Activated CD4-positive, alpha-beta T cell treated with anti-CD3 and anti-CD28 coated beads for 36 hours (primary cell): ENCODE measurements at regions of chr6 and their contacts with region 1.

Region 1: DNA sequence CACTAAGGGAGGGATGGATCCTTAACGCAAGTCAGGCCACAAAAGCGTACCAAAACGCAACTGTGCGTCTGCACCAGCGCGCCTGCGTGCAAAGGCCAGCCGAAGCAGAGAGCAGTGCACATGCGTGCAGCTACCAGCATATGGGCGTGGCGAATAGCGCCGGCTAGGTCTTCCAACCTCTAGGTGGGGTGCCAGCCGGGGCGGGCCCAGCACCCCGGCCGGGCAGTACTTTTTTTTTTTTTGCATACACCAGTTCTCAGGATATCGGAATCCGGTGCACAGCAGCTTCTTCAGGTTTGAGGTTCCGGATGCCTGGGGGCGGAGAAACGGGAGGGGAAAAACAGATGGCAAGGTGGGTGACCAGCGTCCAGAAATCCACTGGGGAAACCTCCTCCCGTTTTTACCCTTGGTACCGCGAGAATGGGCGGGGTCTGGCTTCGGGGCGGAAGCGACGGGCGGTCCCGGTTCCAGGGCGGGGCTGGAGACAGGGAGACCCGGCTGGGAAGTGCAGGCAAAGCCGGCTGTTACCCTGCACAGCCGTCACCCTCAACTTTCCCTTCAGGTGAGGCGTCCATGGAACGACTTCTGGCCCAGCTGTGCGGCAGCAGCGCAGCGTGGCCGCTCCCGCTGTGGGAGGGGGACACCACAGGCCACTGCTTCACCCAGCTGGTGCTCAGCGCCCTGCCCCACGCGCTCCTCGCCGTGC is at the start of gene ABCC10:
- DNase-seq: peak; percentile 97
- ATAC-seq: peak; percentile 97
- H3K4me3 Mint-ChIP-seq: peak within 1 kb of the TSS; percentile 94
- H3K27ac Mint-ChIP-seq: peak within 1 kb of the TSS; percentile 97
- H3K4me1 Mint-ChIP-seq: peaks cover 21% of the 10 kb centered on the region
- H3K27me3 Mint-ChIP-seq: no peaks in the 10 kb centered on the region
- total RNA-seq, gene ABCC10: 27.8 to 29.0 TPM

Region 2: DNA sequence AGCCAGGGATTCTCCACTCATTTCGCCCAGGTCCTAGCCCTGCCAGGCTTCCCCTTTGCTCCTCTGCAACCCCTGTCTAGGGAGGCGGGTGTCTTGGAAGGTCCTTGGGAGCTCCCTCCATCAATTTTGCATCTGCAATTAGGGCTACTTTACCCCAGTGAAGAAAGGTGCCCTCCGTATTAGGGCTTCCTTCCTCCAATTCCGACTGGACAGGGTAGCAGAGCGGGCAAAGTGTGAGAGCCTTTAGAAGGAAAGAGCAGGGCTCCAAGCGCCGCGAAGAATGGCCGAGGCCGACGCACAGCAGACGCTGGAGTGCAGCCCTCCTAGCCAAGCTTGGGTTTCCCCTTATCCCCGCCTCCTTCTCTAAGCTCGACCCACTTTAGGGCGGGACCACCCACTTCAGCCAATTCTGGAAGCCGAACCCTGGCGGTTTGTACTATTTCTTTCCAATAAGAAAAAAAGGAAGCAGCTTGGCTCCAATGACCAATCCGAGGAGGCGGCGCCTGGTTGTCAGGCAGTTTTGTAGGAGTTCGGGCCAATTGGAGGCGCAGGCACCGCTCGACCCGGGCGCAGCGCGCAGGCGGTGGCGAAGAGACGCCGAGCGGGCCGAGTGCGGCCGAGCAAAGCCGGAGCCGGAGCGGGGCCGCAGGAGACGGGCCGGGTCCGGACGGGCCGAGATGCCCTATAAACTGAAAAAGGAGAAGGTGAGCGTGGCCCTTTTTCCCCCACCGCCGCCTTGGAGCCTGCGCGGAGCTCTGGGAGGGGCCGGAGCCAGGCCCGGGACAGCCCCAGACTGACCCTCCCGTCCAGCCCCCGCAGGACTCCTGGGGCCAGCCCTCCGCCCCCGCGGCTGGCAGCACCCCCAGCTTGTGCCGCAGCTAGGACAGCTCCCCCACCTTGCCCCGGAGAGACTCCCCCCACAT is 443.3 kb before region 1 on chr6 and contains the start of gene PPP2R5D:
- CTCF ChIA-PET with region 1: no interaction called
- POLR2A ChIA-PET with region 1: interaction called, 3 read pairs
- intact Hi-C with region 1: loop called in 1 of 2 experiments (anchors 1 kb)
- DNase-seq: peak; percentile 98
- ATAC-seq: peak; percentile 92
- H3K4me3 Mint-ChIP-seq: peak within 1 kb of the TSS; percentile 79
- H3K27ac Mint-ChIP-seq: peak within 1 kb of the TSS; percentile 82
- H3K4me1 Mint-ChIP-seq: peaks cover 52% of the 10 kb centered on the region
- H3K27me3 Mint-ChIP-seq: no peaks in the 10 kb centered on the region
- total RNA-seq, gene PPP2R5D: 51.0 to 57.3 TPM

Region 3: GRCh38 chr6:43247113-43247999 is 180.2 kb before region 1 on chr6:
- CTCF ChIA-PET with region 1: no interaction called
- POLR2A ChIA-PET with region 1: no interaction called
- intact Hi-C with region 1: loop called (anchors 1 kb)
- DNase-seq: peak; percentile 94
- ATAC-seq: peak; percentile 99
- H3K4me3 Mint-ChIP-seq: peak overlapping the region; percentile 68
- H3K27ac Mint-ChIP-seq: peak overlapping the region; percentile 62
- H3K4me1 Mint-ChIP-seq: peaks cover 25% of the 10 kb centered on the region
- H3K27me3 Mint-ChIP-seq: peaks cover 14% of the 10 kb centered on the region

Region 4: GRCh38 chr6:43477235-43478007 is 49.9 kb after region 1 on chr6 and contains the start of gene TJAP1:
- CTCF ChIA-PET with region 1: interaction called, 6 read pairs
- POLR2A ChIA-PET with region 1: no interaction called
- intact Hi-C with region 1: loop called (anchors 1 to 2 kb)
- DNase-seq: peak; percentile 98
- ATAC-seq: peak; percentile 99
- H3K4me3 Mint-ChIP-seq: peak within 1 kb of the TSS; percentile 98
- H3K27ac Mint-ChIP-seq: peak within 1 kb of the TSS; percentile 82
- H3K4me1 Mint-ChIP-seq: peaks cover 38% of the 10 kb centered on the region
- H3K27me3 Mint-ChIP-seq: no peaks in the 10 kb centered on the region
- total RNA-seq, gene TJAP1: 35.6 to 37.2 TPM

Region 5: DNA sequence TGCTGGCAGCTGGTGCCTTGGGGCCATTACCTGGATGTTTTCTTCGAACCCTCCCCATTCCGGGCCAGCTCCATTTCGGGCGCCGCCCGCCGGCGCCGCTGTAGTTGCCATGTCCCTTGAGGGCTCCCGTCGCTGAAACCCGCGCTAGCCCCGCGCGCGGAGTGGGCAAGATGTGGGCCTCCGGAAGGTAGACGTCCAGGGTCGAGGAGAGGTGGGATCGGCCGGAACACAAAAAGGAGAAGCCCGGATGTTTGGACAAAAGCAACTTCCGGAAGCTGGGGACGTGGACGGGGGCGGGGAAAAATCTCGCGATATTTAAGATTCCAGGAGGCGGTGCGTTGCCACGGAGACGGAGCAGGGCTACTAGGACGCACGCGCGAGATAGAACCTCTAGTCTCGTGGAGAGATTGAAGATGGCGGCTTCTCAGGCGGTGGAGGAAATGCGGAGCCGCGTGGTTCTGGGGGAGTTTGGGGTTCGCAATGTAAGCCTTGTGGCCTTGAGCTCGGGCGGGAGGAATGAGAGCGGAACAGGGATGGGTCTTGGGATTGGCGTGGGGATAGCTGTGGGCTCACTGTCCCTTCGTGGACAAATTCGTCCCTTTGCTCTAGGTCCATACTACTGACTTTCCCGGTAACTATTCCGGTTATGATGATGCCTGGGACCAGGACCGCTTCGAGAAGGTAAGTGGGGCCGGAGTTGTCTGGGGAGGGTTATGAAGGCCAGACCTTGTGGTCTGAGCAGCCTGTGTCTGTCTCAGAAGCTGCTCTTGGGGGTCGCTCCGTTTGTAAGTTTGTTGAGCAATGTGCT is 89.3 kb after region 1 on chr6 and contains the starts of genes POLR1C and YIPF3:
- CTCF ChIA-PET with region 1: no interaction called
- POLR2A ChIA-PET with region 1: interaction called, 3 read pairs
- intact Hi-C with region 1: loop called in 1 of 2 experiments (anchors 1 kb)
- DNase-seq: peak; percentile 98
- ATAC-seq: peak; percentile 93
- H3K4me3 Mint-ChIP-seq: no peak within 1 kb of the TSS
- H3K27ac Mint-ChIP-seq: no peak within 1 kb of the TSS
- H3K4me1 Mint-ChIP-seq: peaks cover 32% of the 10 kb centered on the region
- H3K27me3 Mint-ChIP-seq: no peaks in the 10 kb centered on the region
- total RNA-seq, gene POLR1C: 43.4 to 52.9 TPM
- total RNA-seq, gene YIPF3: 38.0 to 39.6 TPM

Region 6: DNA sequence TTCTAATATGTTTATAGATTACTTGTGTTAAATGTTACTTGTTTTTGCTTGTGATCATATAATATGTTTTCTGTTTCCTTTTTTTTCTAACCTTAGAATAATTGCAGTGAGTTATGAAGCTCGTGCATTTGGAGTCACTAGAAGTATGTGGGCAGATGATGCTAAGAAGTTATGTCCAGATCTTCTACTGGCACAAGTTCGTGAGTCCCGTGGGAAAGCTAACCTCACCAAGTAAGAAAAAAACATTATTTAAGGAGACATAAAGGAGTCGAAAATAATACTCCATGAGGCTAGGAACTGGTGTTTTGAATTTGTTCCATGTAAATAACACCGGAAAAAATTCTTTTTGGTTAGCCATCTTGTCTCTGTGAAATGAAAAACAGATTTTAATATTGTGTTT is 155.4 kb after region 1 on chr6:
- CTCF ChIA-PET with region 1: no interaction called
- POLR2A ChIA-PET with region 1: no interaction called
- intact Hi-C with region 1: no loop called
- DNase-seq: no peak
- ATAC-seq: no peak
- H3K4me3 Mint-ChIP-seq: no peak overlapping the region
- H3K27ac Mint-ChIP-seq: peak overlapping the region; percentile 8
- H3K4me1 Mint-ChIP-seq: peaks cover 28% of the 10 kb centered on the region
- H3K27me3 Mint-ChIP-seq: no peaks in the 10 kb centered on the region

Region 7: GRCh38 chr6:43629505-43630300 is 202.1 kb after region 1 on chr6:
- CTCF ChIA-PET with region 1: no interaction called
- POLR2A ChIA-PET with region 1: no interaction called
- intact Hi-C with region 1: loop called in 1 of 2 experiments (anchors 1 kb)
- DNase-seq: peak; percentile 96
- ATAC-seq: peak; percentile 77
- H3K4me3 Mint-ChIP-seq: peak overlapping the region; percentile 88
- H3K27ac Mint-ChIP-seq: peak overlapping the region; percentile 100
- H3K4me1 Mint-ChIP-seq: peaks cover 33% of the 10 kb centered on the region
- H3K27me3 Mint-ChIP-seq: no peaks in the 10 kb centered on the region